Lower leg skin (tissue), 4 donors: ENCODE measurements at regions of chr1 and their contacts with region 1.

Region 1: GRCh38 chr1:213201380-213202155 is 150.5 kb downstream of the RPS6KC1 start:
- DNase-seq: peak in 1 of 2 donors; percentile 29
- H3K4me3 ChIP-seq: no peak overlapping the region
- CTCF ChIP-seq: no peak
- POLR2A ChIP-seq: no peak

Region 2: DNA sequence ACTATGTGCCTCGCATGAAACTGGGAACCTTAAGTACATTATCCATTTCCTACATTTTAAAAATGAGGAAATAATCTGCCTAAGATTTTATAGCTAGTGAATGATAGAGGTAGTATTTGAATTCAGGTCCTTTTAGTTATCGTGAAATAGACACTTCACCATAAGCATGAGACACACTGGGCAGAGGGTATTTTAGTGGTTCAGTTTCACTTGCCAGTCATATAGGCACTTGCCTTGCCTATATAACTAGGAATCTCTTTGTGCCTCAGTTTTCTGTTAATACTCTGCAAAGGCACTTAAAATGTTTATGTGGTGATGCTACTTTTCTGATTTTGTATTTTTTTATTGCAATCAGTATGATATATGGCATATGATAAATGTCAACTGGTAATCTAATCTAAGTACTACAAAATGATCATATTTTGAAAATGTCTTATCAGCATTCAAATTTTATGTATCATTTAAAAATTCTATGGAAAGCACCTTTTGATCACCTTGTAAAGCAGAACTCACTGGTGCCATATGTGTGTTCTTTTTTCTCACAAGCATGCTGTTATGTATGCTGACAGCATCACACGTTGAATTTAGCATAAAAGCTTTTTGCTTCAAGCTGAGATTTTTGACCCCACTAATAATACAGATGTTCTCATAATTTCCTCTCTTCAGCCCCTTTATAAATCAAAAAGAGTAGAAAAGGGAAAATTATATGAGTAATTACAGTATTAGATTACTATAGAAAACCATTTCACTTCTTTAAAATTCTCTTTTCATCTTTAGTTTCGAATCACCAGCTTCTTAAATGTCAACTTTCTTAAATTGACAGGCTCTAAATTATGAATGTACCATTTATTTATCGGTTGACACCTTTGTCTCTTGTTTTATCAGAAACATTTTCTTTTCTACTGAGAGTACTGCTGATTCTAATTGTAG is 97.9 kb before region 1 on chr1:
- intact Hi-C with region 1: no loop called
- DNase-seq: no peak
- H3K4me3 ChIP-seq: no peak overlapping the region
- CTCF ChIP-seq: no peak
- POLR2A ChIP-seq: no peak

Region 3: DNA sequence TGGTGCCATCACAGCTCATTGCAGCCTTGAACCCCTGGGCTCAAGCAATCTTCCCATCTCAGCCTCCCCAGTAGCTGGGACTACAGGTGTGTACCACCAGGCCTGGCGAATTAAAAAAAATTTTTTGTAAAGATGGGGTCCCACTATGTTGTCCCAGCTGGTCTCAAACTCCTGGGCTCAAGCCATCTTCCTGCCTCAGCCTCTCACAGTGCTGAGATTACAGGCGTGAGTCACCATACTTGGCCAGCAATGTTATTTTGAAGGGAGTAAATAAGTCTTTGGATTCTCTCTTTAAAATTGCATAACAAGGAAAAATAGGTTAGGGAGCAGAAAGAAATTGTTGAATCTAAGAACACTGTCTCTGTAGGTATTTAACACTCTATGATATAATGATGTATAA is 39.2 kb before region 1 on chr1:
- intact Hi-C with region 1: loop called (anchors 1 kb)
- DNase-seq: peak in 1 of 2 donors; percentile 62
- H3K4me3 ChIP-seq: no peak overlapping the region
- CTCF ChIP-seq: no peak
- POLR2A ChIP-seq: no peak